ENCODE measurements at regions of chr1 and their contacts with region 1.

Region 1: GRCh38 chr1:158998781-158999161 is 10.9 kb upstream of the IFI16 start:
- DNase-seq: peak; percentile 25
- H3K4me3 Mint-ChIP-seq: peak overlapping the region; percentile 5
- H3K27ac Mint-ChIP-seq: peak overlapping the region; percentile 52
- H3K4me1 Mint-ChIP-seq: peaks cover 43% of the 10 kb centered on the region
- H3K27me3 Mint-ChIP-seq: no peaks in the 10 kb centered on the region

Region 2: DNA sequence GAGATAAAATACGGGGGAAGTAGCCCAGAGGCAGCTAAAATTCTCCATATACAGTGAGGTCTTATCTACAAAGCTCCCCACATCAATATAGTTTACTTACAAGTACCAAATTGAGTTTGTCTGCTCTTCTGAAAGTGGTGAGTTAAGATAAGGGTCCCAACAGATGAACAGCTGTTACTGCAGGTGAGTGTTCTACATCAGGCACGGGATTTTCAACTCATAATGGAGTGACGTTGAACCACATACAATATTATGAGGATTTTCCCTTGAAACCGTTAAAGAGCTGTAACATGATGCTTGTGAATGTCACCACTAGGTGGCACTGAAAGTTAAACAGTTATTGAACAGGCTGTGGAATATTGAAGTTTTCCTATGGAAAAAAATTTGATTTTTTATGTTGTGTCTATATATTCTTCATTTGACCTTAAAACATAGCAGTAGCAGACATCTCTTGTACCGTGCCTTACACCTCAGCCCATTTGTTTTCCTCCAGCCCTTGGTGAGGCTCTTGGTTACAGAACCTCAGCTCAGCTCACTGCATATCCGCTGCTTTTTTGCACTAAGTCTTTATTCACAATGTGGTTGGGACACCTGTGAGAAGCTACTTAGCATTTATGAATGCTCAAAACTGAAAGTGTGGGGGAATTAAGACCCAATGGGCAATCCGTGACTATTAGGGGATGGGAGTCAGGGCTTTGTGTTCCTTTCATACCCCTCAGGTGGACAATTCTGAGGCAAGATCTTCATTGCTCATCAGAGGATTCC is 794.9 kb before region 1 on chr1:
- CTCF ChIA-PET with region 1: interaction called, 20 read pairs
- POLR2A ChIA-PET with region 1: no interaction called
- intact Hi-C with region 1: loop called (anchors 1 kb)
- DNase-seq: no peak
- H3K4me3 Mint-ChIP-seq: no peak overlapping the region
- H3K27ac Mint-ChIP-seq: no peak overlapping the region
- H3K4me1 Mint-ChIP-seq: peaks cover 7% of the 10 kb centered on the region
- H3K27me3 Mint-ChIP-seq: peaks cover 12% of the 10 kb centered on the region

Region 3: GRCh38 chr1:158649052-158649451 is 349.7 kb before region 1 on chr1:
- CTCF ChIA-PET with region 1: no interaction called
- POLR2A ChIA-PET with region 1: no interaction called
- intact Hi-C with region 1: loop called (anchors 10 kb)
- DNase-seq: no peak
- H3K4me3 Mint-ChIP-seq: no peak overlapping the region
- H3K27ac Mint-ChIP-seq: no peak overlapping the region
- H3K4me1 Mint-ChIP-seq: peaks cover 18% of the 10 kb centered on the region
- H3K27me3 Mint-ChIP-seq: no peaks in the 10 kb centered on the region

Region 4: GRCh38 chr1:158793604-158794003 is 205.2 kb before region 1 on chr1:
- CTCF ChIA-PET with region 1: interaction called, 46 read pairs
- POLR2A ChIA-PET with region 1: no interaction called
- intact Hi-C with region 1: loop called (anchors 1 kb)
- DNase-seq: peak; percentile 56
- H3K4me3 Mint-ChIP-seq: no peak overlapping the region
- H3K27ac Mint-ChIP-seq: no peak overlapping the region
- H3K4me1 Mint-ChIP-seq: no peaks in the 10 kb centered on the region
- H3K27me3 Mint-ChIP-seq: peaks cover under 1% of the 10 kb centered on the region

Region 5: GRCh38 chr1:158830904-158831507 is 167.8 kb before region 1 on chr1 and contains the start of gene MNDA:
- CTCF ChIA-PET with region 1: interaction called, 3 read pairs
- POLR2A ChIA-PET with region 1: no interaction called
- intact Hi-C with region 1: loop called (anchors 5 kb)
- DNase-seq: no peak
- H3K4me3 Mint-ChIP-seq: no peak within 1 kb of the TSS
- H3K27ac Mint-ChIP-seq: no peak within 1 kb of the TSS
- H3K4me1 Mint-ChIP-seq: peaks cover 18% of the 10 kb centered on the region
- H3K27me3 Mint-ChIP-seq: no peaks in the 10 kb centered on the region
- total RNA-seq, gene MNDA: not detected

Region 6: GRCh38 chr1:158972841-158973240 is 25.9 kb before region 1 on chr1:
- CTCF ChIA-PET with region 1: interaction called, 8 read pairs
- POLR2A ChIA-PET with region 1: interaction called, 5 read pairs
- intact Hi-C with region 1: loop called (anchors 1 kb)
- DNase-seq: peak; percentile 37
- H3K4me3 Mint-ChIP-seq: no peak overlapping the region
- H3K27ac Mint-ChIP-seq: no peak overlapping the region
- H3K4me1 Mint-ChIP-seq: peaks cover 43% of the 10 kb centered on the region
- H3K27me3 Mint-ChIP-seq: no peaks in the 10 kb centered on the region